ENCODE measurements at regions of chr15 and their contacts with region 1.

Region 1: GRCh38 chr15:90249203-90249863 is at the start of gene TTLL13:
- DNase-seq: peak; percentile 27 to 79 (median 56)
- H3K4me3 ChIP-seq: peak within 1 kb of the TSS; percentile 53
- H3K4me3 Mint-ChIP-seq: peak within 1 kb of the TSS; percentile 71 to 86 (median 76)
- H3K27ac ChIP-seq: no peak within 1 kb of the TSS
- H3K27ac Mint-ChIP-seq: peak within 1 kb of the TSS in 7 of 8 donors; percentile 35 to 93 (median 70)
- H3K4me1 ChIP-seq: peaks cover 4% of the 10 kb centered on the region
- H3K4me1 Mint-ChIP-seq: peaks cover 12 to 20% (median 15%) of the 10 kb centered on the region in 3 donors
- H3K27me3 ChIP-seq: no peaks in the 10 kb centered on the region
- H3K27me3 Mint-ChIP-seq: no peaks in the 10 kb centered on the region
- total RNA-seq, gene TTLL13: 0.80 TPM in 1 of 2 experiments, not detected in the other

Region 2: DNA sequence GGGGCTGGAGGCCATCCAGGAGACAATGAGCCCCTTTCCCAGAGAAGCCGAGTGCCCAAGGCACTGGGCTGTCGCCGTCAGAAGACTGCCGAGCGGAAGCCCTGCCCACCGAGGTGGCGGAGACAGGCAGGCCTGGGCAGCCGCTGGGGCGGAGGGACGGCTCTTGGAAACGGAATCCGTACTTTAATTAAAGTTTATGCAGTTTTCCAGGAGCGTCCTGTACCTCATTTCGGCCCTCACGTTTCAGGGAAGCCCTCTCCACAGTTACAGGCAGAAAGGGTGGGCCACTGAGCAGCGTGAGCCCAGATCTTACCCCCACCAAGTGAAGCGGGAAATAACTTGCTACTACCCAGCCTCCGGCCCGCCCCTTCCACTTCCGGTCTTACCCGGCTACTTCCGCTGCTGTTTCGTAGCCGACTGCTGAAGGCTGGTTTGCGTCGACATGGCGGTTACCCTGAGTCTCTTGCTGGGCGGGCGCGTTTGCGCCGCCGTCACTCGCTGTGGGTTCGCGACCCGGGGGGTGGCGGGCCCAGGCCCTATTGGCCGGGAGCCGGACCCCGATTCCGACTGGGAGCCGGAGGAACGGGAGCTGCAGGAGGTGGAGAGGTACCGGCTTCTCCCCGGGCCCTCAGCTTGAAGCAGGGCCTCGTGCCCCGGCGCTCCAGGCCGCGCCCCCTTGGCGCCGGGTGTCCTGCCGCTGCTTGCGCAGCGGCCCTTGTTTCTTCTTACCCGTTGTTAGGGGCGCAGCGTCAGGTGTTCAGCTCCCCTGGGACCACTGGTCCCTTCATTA is 16.1 kb after region 1 on chr15 and contains the start of gene NGRN:
- CTCF ChIA-PET with region 1: interaction called, 14 read pairs
- POLR2A ChIA-PET with region 1: no interaction called
- DNase-seq: peak; percentile 85 to 95 (median 92)
- H3K4me3 ChIP-seq: peak within 1 kb of the TSS; percentile 87
- H3K4me3 Mint-ChIP-seq: peak within 1 kb of the TSS; percentile 94 to 99 (median 96)
- H3K27ac ChIP-seq: peak within 1 kb of the TSS; percentile 96
- H3K27ac Mint-ChIP-seq: peak within 1 kb of the TSS; percentile 95 to 100 (median 100)
- H3K4me1 ChIP-seq: peaks cover 44% of the 10 kb centered on the region
- H3K4me1 Mint-ChIP-seq: peaks cover 47 to 56% (median 53%) of the 10 kb centered on the region in 3 donors
- H3K27me3 ChIP-seq: no peaks in the 10 kb centered on the region
- H3K27me3 Mint-ChIP-seq: no peaks in the 10 kb centered on the region
- total RNA-seq, gene NGRN: 34.1 to 36.0 TPM

Region 3: GRCh38 chr15:90322538-90322937 is 73.2 kb after region 1 on chr15:
- CTCF ChIA-PET with region 1: no interaction called
- POLR2A ChIA-PET with region 1: no interaction called
- DNase-seq: no peak
- H3K4me3 ChIP-seq: no peak overlapping the region
- H3K4me3 Mint-ChIP-seq: no peak overlapping the region
- H3K27ac ChIP-seq: no peak overlapping the region
- H3K27ac Mint-ChIP-seq: no peak overlapping the region
- H3K4me1 ChIP-seq: peaks cover 6% of the 10 kb centered on the region
- H3K4me1 Mint-ChIP-seq: peaks cover 5 to 9% (median 6%) of the 10 kb centered on the region in 3 donors
- H3K27me3 ChIP-seq: no peaks in the 10 kb centered on the region
- H3K27me3 Mint-ChIP-seq: peaks cover 0 to 1% of the 10 kb centered on the region in 2 donors